Activated T-helper 1 cell treated with anti-CD3 and anti-CD28 coated beads, Interleukin-12 subunit alpha, Interleukin-12 subunit beta, Interleukin-2, Interleukin-4 antibody, amounts not matched to agents 30 ng/mL and 10 ng/mL and 1 ng/mL, durations not matched to agents 14 hours and 24 hours and 36 hours (primary cell): ENCODE measurements at regions of chr18 and their contacts with region 1.

Region 1: DNA sequence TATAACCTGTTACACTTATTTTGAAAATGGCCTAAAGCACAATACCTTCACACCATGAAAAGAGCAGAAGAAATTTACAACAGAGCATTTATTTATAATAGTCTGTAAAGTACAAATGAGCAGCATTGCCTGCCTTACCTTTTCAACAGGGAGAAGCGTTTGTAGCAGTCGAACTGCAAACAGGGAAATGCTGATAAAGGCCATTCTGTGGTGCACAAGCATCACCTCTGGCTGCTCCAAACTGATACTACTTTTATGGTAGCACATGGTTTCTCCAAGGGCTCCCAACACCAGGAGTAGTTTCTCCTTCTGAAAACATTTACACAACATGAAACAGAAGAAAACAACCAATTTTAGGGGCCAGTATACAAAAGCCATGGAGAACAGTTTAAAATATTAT is 28.9 kb downstream of the RTTN start:
- DNase-seq: no peak
- H3K4me3 Mint-ChIP-seq: no peak overlapping the region
- H3K27ac Mint-ChIP-seq: no peak overlapping the region
- H3K4me1 Mint-ChIP-seq: peaks cover 4% of the 10 kb centered on the region
- H3K27me3 Mint-ChIP-seq: no peaks in the 10 kb centered on the region

Region 2: GRCh38 chr18:70132999-70133398 is 43.5 kb before region 1 on chr18:
- intact Hi-C with region 1: no loop called
- DNase-seq: no peak
- H3K4me3 Mint-ChIP-seq: no peak overlapping the region
- H3K27ac Mint-ChIP-seq: no peak overlapping the region
- H3K4me1 Mint-ChIP-seq: no peaks in the 10 kb centered on the region
- H3K27me3 Mint-ChIP-seq: no peaks in the 10 kb centered on the region

Region 3: GRCh38 chr18:70256994-70257393 is 80.5 kb after region 1 on chr18:
- intact Hi-C with region 1: no loop called
- DNase-seq: no peak
- H3K4me3 Mint-ChIP-seq: no peak overlapping the region
- H3K27ac Mint-ChIP-seq: no peak overlapping the region
- H3K4me1 Mint-ChIP-seq: no peaks in the 10 kb centered on the region
- H3K27me3 Mint-ChIP-seq: peaks cover 3% of the 10 kb centered on the region

Region 4: GRCh38 chr18:70454704-70455322 is 278.3 kb after region 1 on chr18:
- intact Hi-C with region 1: loop called (anchors 5 kb)
- DNase-seq: peak; percentile 4
- H3K4me3 Mint-ChIP-seq: no peak overlapping the region
- H3K27ac Mint-ChIP-seq: no peak overlapping the region
- H3K4me1 Mint-ChIP-seq: no peaks in the 10 kb centered on the region
- H3K27me3 Mint-ChIP-seq: peaks cover 4% of the 10 kb centered on the region